Caco-2 (cell line): ENCODE measurements at regions of chr12 and their contacts with region 1.

Region 1: DNA sequence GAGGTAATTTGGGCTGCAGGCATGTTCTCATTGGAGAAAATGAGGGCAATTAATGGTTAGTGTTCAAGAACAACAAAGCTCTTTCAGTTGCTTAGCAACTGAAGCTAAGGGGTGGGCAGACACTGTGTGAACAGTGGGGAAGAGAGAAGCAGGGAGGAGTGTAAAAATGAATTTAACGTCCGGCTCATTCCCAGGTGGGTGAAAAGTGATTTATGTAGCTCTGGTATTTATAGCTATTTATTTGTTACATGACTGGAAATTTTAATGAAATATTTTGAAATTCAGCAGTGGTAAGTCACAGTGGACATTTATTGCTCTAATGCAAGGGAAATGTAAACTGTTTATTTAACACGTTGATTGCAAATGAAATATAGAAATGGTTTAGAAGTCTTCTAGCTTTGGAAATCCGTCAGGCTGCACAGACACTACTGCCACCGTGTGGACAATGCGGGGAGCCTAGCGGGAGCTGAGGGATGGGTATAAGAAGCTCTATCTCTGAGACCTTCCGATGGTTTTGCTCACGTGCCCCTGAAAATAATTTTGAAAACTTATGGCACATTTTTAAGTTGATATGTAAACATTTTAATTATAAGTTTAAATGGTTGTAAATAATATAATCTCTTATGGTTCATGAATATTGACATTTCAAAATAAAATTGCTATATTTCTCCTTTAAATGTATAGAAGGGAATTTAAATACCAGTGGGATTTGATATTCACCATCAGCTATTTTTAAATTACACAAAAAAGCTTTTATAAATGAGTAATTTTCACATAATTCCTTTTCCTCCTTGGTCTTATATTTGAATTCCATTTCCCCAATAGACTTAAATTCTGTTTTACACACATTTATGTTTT is 54.4 kb downstream of the E2F7 start:
- DNase-seq: peak; percentile 71 to 76
- H3K4me3 ChIP-seq: no peak overlapping the region
- H3K4me3 Mint-ChIP-seq: no peak overlapping the region
- H3K27ac Mint-ChIP-seq: no peak overlapping the region
- H3K4me1 ChIP-seq: no peaks in the 10 kb centered on the region
- H3K4me1 Mint-ChIP-seq: peaks cover 6% of the 10 kb centered on the region
- H3K27me3 ChIP-seq: no peaks in the 10 kb centered on the region
- H3K27me3 Mint-ChIP-seq: peaks cover 2% of the 10 kb centered on the region
- CTCF ChIP-seq: peak; percentile 85 to 95

Region 2: GRCh38 chr12:76820888-76821482 is 189.9 kb before region 1 on chr12:
- CTCF ChIA-PET with region 1: interaction called, 6 read pairs
- POLR2A ChIA-PET with region 1: no interaction called
- intact Hi-C with region 1: loop called (anchors 2 kb)
- DNase-seq: peak; percentile 52
- H3K4me3 ChIP-seq: no peak overlapping the region
- H3K4me3 Mint-ChIP-seq: no peak overlapping the region
- H3K27ac Mint-ChIP-seq: no peak overlapping the region
- H3K4me1 ChIP-seq: no peaks in the 10 kb centered on the region
- H3K4me1 Mint-ChIP-seq: no peaks in the 10 kb centered on the region
- H3K27me3 ChIP-seq: no peaks in the 10 kb centered on the region
- H3K27me3 Mint-ChIP-seq: no peaks in the 10 kb centered on the region
- CTCF ChIP-seq: peak; percentile 63 to 76

Region 3: DNA sequence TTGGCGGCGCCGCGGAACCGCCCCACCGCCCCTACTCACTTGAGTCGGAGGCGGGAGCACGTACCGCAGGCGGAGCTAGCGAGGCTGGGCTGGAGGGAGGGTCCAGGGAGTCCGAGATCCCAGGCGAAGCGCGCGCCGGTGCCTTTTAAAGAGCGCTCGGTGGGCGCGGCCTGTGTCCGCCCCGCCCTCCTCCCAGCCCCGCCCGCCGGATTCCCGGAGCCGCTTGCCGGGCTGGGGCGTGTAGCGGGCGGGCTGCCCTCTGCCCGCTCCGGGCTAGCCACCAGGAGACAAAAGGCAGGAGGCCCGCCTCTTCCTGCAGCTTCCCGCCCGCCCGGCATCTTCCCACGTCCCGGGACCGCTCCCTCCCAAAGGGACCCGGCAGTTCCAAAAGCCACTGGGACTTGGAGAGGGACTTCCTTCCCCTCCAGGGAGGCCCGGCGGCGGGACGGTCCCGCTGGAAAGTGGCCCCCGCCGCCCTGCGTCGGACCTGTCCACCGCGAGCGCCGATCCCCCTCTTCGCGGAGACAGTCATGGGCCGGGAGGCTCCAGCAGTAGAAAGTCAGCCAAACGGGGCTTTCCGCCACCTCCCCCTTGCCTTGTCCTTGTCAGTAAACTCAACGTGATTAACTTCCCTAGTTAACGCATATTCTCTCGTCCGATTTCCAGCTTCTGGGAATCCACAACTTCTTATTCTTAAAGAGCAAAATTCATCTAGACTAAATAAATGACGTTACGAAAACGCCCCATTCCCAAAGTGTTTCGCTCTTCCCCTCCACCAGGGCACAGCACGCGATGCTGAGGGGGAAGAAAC is 131.8 kb before region 1 on chr12 and contains the start of gene CSRP2:
- CTCF ChIA-PET with region 1: interaction called, 9 read pairs
- POLR2A ChIA-PET with region 1: no interaction called
- intact Hi-C with region 1: loop called (anchors 1 kb)
- DNase-seq: peak; percentile 92 to 93
- H3K4me3 ChIP-seq: peak within 1 kb of the TSS; percentile 80
- H3K4me3 Mint-ChIP-seq: peak within 1 kb of the TSS; percentile 85
- H3K27ac Mint-ChIP-seq: peak within 1 kb of the TSS; percentile 91
- H3K4me1 ChIP-seq: peaks cover 4% of the 10 kb centered on the region
- H3K4me1 Mint-ChIP-seq: no peaks in the 10 kb centered on the region
- H3K27me3 ChIP-seq: no peaks in the 10 kb centered on the region
- H3K27me3 Mint-ChIP-seq: no peaks in the 10 kb centered on the region
- CTCF ChIP-seq: no peak
- total RNA-seq, gene CSRP2: 22.2 and 27.9 TPM in 2 replicates

Region 4: DNA sequence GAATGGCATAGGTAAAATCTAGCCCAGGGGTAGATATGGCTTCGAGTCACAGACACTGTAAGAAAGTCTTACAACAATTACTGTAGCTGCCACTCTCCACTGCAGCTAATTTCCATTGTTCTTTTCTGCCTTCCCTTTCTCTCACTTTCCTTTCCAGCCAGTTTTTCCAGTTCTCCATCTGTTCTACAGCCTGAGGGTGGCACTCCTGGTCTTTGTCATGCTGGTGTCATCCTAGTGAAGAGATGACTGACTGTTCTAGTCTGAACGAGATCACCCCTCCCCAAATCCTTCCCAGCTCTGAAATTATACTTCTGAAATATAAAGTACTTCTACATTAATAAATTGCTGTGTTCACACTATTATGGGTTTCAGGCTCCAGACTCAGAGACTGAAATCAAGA is 57.9 kb before region 1 on chr12:
- CTCF ChIA-PET with region 1: interaction called, 12 read pairs
- POLR2A ChIA-PET with region 1: no interaction called
- intact Hi-C with region 1: loop called (anchors 1 kb)
- DNase-seq: peak in 1 of 2 experiments; percentile 40
- H3K4me3 ChIP-seq: no peak overlapping the region
- H3K4me3 Mint-ChIP-seq: no peak overlapping the region
- H3K27ac Mint-ChIP-seq: no peak overlapping the region
- H3K4me1 ChIP-seq: no peaks in the 10 kb centered on the region
- H3K4me1 Mint-ChIP-seq: no peaks in the 10 kb centered on the region
- H3K27me3 ChIP-seq: no peaks in the 10 kb centered on the region
- H3K27me3 Mint-ChIP-seq: peaks cover 16% of the 10 kb centered on the region
- CTCF ChIP-seq: peak in 1 of 2 experiments; percentile 33

Region 5: DNA sequence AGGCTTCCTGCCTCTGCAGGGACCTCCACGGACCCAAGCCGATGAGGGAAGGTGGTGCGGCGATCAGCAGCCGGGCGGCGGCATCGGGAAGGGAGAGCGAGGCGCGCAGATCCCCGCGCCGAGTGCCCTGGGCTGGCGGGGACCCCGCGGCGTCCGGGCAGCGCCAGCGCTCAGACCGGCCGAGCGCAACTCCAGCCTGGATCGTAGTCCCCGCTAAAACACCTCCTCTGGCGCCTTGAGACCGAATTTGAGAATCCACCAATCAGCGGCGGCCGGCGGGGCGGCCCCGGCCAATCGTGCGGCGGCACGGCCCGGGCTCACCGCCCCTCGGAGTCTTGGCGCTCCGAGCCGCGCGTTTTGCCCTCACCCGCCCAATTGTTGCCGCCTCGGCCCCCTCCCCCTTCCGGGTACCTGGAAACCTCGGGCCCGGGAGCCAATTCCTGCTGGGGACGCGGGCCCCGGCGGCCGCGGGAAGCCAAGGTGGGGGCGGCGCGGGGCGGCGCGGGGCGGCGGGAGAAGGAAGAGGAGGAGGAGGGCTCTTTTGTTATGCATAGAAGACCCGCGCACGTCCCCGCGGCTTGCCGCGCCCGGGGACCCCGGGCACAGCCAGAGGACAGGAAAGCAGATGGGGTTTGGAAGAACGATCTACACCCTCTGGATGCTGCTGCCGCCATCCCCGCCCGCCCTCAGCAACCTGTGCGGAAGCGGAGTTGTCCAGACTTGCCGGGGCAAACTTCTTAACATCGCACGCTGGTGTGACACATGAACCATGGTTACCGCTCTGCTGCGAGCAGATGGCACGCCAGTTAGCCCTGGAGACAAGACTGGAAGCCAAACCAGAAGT is 54.7 kb after region 1 on chr12 and contains the start of gene E2F7:
- CTCF ChIA-PET with region 1: no interaction called
- POLR2A ChIA-PET with region 1: no interaction called
- intact Hi-C with region 1: no loop called
- DNase-seq: peak; percentile 95 to 96
- H3K4me3 ChIP-seq: peak within 1 kb of the TSS; percentile 82
- H3K4me3 Mint-ChIP-seq: peak within 1 kb of the TSS; percentile 70
- H3K27ac Mint-ChIP-seq: peak within 1 kb of the TSS; percentile 80
- H3K4me1 ChIP-seq: 0 out of 2 replicates have a peak, but pooled peaks cover 7% of the 10 kb centered on the region
- H3K4me1 Mint-ChIP-seq: no peaks in the 10 kb centered on the region
- H3K27me3 ChIP-seq: no peaks in the 10 kb centered on the region
- H3K27me3 Mint-ChIP-seq: peaks cover 8% of the 10 kb centered on the region
- CTCF ChIP-seq: no peak
- total RNA-seq, gene E2F7: 11.4 and 11.6 TPM in 2 replicates

Region 6: GRCh38 chr12:77133566-77133965 is 122.6 kb after region 1 on chr12:
- CTCF ChIA-PET with region 1: no interaction called
- POLR2A ChIA-PET with region 1: no interaction called
- intact Hi-C with region 1: no loop called
- DNase-seq: peak; percentile 54 to 62
- H3K4me3 ChIP-seq: no peak overlapping the region
- H3K4me3 Mint-ChIP-seq: no peak overlapping the region
- H3K27ac Mint-ChIP-seq: no peak overlapping the region
- H3K4me1 ChIP-seq: 0 out of 2 replicates have a peak, but pooled peaks cover 7% of the 10 kb centered on the region
- H3K4me1 Mint-ChIP-seq: no peaks in the 10 kb centered on the region
- H3K27me3 ChIP-seq: no peaks in the 10 kb centered on the region
- H3K27me3 Mint-ChIP-seq: peaks cover 8% of the 10 kb centered on the region
- CTCF ChIP-seq: no peak